Ascending aorta (tissue), 2 donors: ENCODE measurements at regions of chr11 and their contacts with region 1.

Region 1: GRCh38 chr11:78416305-78417178 is 1.1 kb downstream of the GAB2 start:
- DNase-seq: peak; percentile 78 to 94
- H3K4me3 ChIP-seq: peak overlapping the region; percentile 82 to 84
- H3K27ac ChIP-seq: peak overlapping the region; percentile 98 to 100
- H3K4me1 ChIP-seq: peaks cover 0 to 19% of the 10 kb centered on the region in 2 donors
- H3K27me3 ChIP-seq: no peaks in the 10 kb centered on the region
- CTCF ChIP-seq: peak in 2 of 3 experiments; percentile 50 to 53

Region 2: GRCh38 chr11:78079232-78080083 is 337.1 kb before region 1 on chr11 and contains the start of gene NDUFC2:
- intact Hi-C with region 1: loop called (anchors 5 kb)
- DNase-seq: peak in 1 of 2 donors; percentile 84
- H3K4me3 ChIP-seq: peak within 1 kb of the TSS; percentile 85 to 86
- H3K27ac ChIP-seq: peak within 1 kb of the TSS; percentile 85 to 86
- H3K4me1 ChIP-seq: peaks cover 10 to 28% of the 10 kb centered on the region in 2 donors
- H3K27me3 ChIP-seq: no peaks in the 10 kb centered on the region
- CTCF ChIP-seq: no peak
- total RNA-seq, gene NDUFC2: 112 TPM

Region 3: GRCh38 chr11:78168539-78169477 is 247.7 kb before region 1 on chr11:
- intact Hi-C with region 1: loop called (anchors 1 kb)
- DNase-seq: peak; percentile 87 to 98
- H3K4me3 ChIP-seq: no peak overlapping the region
- H3K27ac ChIP-seq: peak overlapping the region; percentile 96
- H3K4me1 ChIP-seq: peaks cover 6 to 46% of the 10 kb centered on the region in 2 donors
- H3K27me3 ChIP-seq: no peaks in the 10 kb centered on the region
- CTCF ChIP-seq: no peak

Region 4: GRCh38 chr11:78228467-78228866 is 188.1 kb before region 1 on chr11:
- intact Hi-C with region 1: loop called (anchors 2 kb)
- DNase-seq: peak in 1 of 2 donors; percentile 61
- H3K4me3 ChIP-seq: no peak overlapping the region
- H3K27ac ChIP-seq: peak overlapping the region in 1 of 2 donors; percentile 31
- H3K4me1 ChIP-seq: peaks cover 0 to 20% of the 10 kb centered on the region in 2 donors
- H3K27me3 ChIP-seq: no peaks in the 10 kb centered on the region
- CTCF ChIP-seq: peak; percentile 21 to 59 (median 26)

Region 5: GRCh38 chr11:78289552-78290292 is 126.8 kb before region 1 on chr11:
- intact Hi-C with region 1: no loop called
- DNase-seq: no peak
- H3K4me3 ChIP-seq: no peak overlapping the region
- H3K27ac ChIP-seq: no peak overlapping the region
- H3K4me1 ChIP-seq: no peaks in the 10 kb centered on the region
- H3K27me3 ChIP-seq: no peaks in the 10 kb centered on the region
- CTCF ChIP-seq: no peak

Region 6: GRCh38 chr11:78465169-78465942 is 48.8 kb after region 1 on chr11:
- intact Hi-C with region 1: no loop called
- DNase-seq: no peak
- H3K4me3 ChIP-seq: no peak overlapping the region
- H3K27ac ChIP-seq: no peak overlapping the region
- H3K4me1 ChIP-seq: no peaks in the 10 kb centered on the region
- H3K27me3 ChIP-seq: no peaks in the 10 kb centered on the region
- CTCF ChIP-seq: no peak

Region 7: DNA sequence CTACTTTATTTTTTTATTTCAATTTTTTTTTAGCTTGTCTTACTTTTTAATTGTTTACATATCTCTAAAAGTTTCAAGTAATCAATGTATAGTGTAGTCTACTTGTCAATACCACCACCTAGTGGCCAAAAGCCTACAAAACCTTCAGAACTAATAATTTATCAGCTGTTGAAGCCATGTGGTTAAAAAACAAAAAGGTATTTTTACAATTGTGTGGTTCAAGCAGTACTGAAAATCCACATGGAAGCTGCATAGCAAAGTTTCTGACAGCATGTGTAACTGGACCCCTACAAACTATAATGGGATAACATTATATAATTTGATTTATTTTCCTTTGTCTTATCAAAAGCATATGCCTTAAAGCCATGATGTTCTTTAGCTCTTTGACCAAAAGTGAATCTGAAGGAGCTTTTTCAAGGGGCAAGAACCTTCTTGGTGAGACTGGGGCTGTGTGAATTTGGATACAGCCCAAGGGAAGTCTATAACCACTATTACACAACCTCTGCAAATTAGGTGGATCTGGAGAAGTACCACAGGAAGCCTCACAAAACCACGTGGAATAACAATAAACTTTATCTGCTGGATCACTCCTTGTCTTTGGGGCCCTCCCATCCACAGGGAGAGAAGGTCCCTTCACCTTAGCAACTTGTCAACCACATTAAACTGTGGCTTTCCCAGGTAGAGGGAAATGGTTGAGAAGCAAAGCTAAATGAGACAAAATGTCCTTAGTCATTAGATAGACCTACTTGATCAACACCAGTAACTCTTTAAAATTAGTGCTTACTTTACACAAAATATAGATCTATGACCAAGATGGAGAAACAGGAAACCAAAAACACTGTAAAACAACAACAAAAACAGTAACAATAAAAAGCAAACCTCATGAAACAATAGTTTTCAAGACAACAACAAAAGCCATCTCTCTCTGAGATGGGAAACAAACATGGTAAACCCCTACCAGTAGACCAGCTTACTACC is 148.2 kb after region 1 on chr11:
- intact Hi-C with region 1: loop called (anchors 5 kb)
- DNase-seq: no peak
- H3K4me3 ChIP-seq: no peak overlapping the region
- H3K27ac ChIP-seq: no peak overlapping the region
- H3K4me1 ChIP-seq: peaks cover 6 to 26% of the 10 kb centered on the region in 2 donors
- H3K27me3 ChIP-seq: no peaks in the 10 kb centered on the region
- CTCF ChIP-seq: peak; percentile 48 to 76 (median 64)

Region 8: DNA sequence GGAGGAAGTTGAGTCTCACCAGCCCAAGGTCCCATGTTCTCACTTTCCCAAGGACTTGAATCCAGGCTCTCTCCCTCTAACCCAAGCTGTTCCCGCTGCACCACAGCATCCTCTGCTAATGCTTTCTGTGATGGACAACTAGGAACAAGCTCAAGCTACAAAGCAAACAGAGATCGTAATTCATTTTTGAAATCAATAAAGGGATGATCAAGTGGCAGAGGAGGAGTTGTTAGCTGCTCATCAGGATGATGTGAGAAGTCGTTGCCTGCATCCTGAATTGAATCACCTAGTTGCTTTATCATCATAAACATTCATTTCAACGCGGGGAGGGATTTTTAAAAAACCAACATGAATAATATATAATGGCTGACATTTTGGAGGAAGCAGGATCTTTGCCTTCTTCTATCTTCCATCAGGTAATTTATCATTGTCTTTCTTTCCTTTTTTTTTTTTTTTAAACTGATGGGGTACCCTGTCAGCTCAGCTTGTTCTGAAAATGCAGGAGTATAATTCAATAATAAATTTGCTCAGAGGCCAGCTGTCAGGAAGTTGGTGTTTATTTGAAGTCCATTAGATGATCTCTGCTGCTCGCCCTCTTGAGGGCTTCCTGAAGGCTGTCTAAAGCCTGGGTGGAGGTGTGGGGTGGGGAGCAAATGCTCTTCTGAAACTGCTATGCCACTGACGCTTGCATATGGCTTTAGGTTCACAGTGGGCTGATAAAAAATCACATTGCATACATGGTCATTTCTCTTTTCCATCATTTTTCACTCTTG is 332.6 kb after region 1 on chr11:
- intact Hi-C with region 1: no loop called
- DNase-seq: no peak
- H3K4me3 ChIP-seq: no peak overlapping the region
- H3K27ac ChIP-seq: no peak overlapping the region
- H3K4me1 ChIP-seq: no peaks in the 10 kb centered on the region
- H3K27me3 ChIP-seq: no peaks in the 10 kb centered on the region
- CTCF ChIP-seq: no peak

Region 9: DNA sequence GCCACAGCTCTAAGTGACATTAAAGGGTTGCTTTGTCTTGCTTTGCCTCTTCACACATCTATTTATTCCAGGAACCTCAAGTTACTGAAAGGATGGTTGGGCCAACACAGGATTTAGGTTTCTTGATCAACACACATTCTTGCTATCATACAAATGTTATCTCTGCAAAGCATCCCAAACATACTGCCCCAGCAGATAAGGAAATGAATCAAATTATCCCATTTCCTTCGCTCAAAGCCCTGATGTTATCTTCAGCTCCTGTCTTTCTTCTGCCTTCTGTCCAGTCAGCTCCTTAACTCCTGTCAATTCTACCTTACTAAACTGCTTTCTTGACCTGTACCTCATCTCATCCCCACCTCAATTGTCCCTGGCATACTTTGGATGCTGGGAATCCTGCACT is 1380.2 kb after region 1 on chr11:
- intact Hi-C with region 1: no loop called
- DNase-seq: no peak
- H3K4me3 ChIP-seq: no peak overlapping the region
- H3K27ac ChIP-seq: no peak overlapping the region
- H3K4me1 ChIP-seq: no peaks in the 10 kb centered on the region
- H3K27me3 ChIP-seq: no peaks in the 10 kb centered on the region
- CTCF ChIP-seq: no peak